GM12878 (cell line): ENCODE measurements at regions of chr3 and their contacts with region 1.

Region 1: DNA sequence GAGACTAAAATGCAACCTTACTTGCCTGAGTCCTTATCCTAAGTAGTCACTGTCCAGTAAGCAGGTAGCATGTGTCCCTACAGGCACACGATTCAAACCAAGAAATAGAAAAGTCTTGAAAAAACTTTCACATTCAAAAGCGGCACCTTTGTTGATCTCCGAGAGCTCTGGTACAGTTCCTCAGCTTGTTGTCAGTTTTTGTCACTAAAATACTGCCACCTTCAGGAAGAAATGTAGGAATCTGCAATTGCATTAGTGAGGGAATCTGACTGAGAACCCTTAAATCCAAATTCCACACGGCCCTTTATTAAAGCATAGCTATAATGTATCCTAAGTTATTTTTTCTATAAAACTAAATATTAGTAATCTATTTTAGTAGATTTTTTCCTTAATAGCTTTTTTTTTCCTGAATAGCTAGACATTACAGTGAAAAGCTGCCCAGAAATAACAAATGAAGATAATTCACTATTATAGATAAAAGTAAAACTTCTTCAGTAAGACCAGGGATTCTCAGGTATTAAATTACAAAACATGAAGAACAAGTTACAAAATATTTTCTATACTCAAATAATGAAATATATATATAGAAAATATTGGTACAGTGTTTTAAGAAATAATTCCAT is 44.0 kb downstream of the CCDC54 start:
- DNase-seq: no peak
- ATAC-seq: peak; percentile 86
- H3K4me3 ChIP-seq: no peak overlapping the region
- H3K27ac ChIP-seq: no peak overlapping the region
- H3K4me1 ChIP-seq: no peaks in the 10 kb centered on the region
- H3K27me3 ChIP-seq: no peaks in the 10 kb centered on the region
- CTCF ChIP-seq: peak; percentile 50 to 59 (median 57); a peak in 5 of 6 replicates
- EP300 ChIP-seq: no peak
- POLR2A ChIP-seq: no peak
- RAD21 ChIP-seq: peak; percentile 58

Region 2: GRCh38 chr3:107247110-107247509 is 174.2 kb before region 1 on chr3:
- CTCF ChIA-PET with region 1: interaction called, 10 read pairs
- POLR2A ChIA-PET with region 1: no interaction called
- RAD21 ChIA-PET with region 1: no interaction called
- SMC1A ChIA-PET with region 1: interaction called, 3 read pairs
- in situ Hi-C with region 1: no loop called
- intact Hi-C with region 1: no loop called
- DNase-seq: no peak
- ATAC-seq: no peak
- H3K4me3 ChIP-seq: no peak overlapping the region
- H3K27ac ChIP-seq: no peak overlapping the region
- H3K4me1 ChIP-seq: no peaks in the 10 kb centered on the region
- H3K27me3 ChIP-seq: no peaks in the 10 kb centered on the region
- CTCF ChIP-seq: no peak
- EP300 ChIP-seq: no peak
- POLR2A ChIP-seq: no peak
- RAD21 ChIP-seq: no peak

Region 3: GRCh38 chr3:107402214-107402613 is 19.1 kb before region 1 on chr3:
- CTCF ChIA-PET with region 1: interaction called, 7 read pairs
- POLR2A ChIA-PET with region 1: no interaction called
- RAD21 ChIA-PET with region 1: interaction called, 4 read pairs
- SMC1A ChIA-PET with region 1: interaction called, 13 read pairs
- in situ Hi-C with region 1: no loop called
- intact Hi-C with region 1: no loop called
- DNase-seq: no peak
- ATAC-seq: no peak
- H3K4me3 ChIP-seq: no peak overlapping the region
- H3K27ac ChIP-seq: no peak overlapping the region
- H3K4me1 ChIP-seq: no peaks in the 10 kb centered on the region
- H3K27me3 ChIP-seq: no peaks in the 10 kb centered on the region; a peak in 2 of 4 replicates
- CTCF ChIP-seq: no peak
- EP300 ChIP-seq: no peak
- POLR2A ChIP-seq: no peak
- RAD21 ChIP-seq: no peak

Region 4: GRCh38 chr3:107409365-107409764 is 11.9 kb before region 1 on chr3:
- CTCF ChIA-PET with region 1: interaction called, 20 read pairs
- POLR2A ChIA-PET with region 1: no interaction called
- RAD21 ChIA-PET with region 1: interaction called, 4 read pairs
- SMC1A ChIA-PET with region 1: interaction called, 3 read pairs
- in situ Hi-C with region 1: no loop called
- intact Hi-C with region 1: no loop called
- DNase-seq: no peak
- ATAC-seq: no peak
- H3K4me3 ChIP-seq: no peak overlapping the region
- H3K27ac ChIP-seq: no peak overlapping the region
- H3K4me1 ChIP-seq: no peaks in the 10 kb centered on the region
- H3K27me3 ChIP-seq: peaks cover 0 to 1% of the 10 kb centered on the region in 2 experiments; a peak in 1 of 4 replicates
- CTCF ChIP-seq: no peak
- EP300 ChIP-seq: no peak
- POLR2A ChIP-seq: no peak
- RAD21 ChIP-seq: no peak

Region 5: DNA sequence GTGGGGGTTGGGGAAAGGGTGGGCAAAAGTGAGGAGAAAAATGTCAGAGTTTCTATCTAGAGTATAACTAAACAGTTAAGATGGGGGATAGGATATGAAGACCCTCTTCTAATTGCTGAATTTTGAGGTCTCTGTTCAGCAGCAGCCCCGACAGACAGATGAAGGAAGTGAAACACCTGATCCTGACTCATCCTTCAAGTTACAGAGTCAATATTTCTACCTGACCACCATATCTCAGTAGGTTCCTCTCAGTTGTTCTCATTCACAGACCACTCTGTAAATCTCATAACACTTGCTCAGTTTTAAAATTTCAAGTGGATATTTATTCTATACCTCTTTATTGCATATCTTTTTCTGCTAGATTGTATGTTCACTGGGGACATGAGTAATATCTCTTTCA is 25.4 kb after region 1 on chr3:
- CTCF ChIA-PET with region 1: no interaction called
- POLR2A ChIA-PET with region 1: no interaction called
- RAD21 ChIA-PET with region 1: no interaction called
- SMC1A ChIA-PET with region 1: no interaction called
- in situ Hi-C with region 1: no loop called
- intact Hi-C with region 1: no loop called
- DNase-seq: no peak
- ATAC-seq: peak; percentile 56
- H3K4me3 ChIP-seq: no peak overlapping the region
- H3K27ac ChIP-seq: no peak overlapping the region
- H3K4me1 ChIP-seq: no peaks in the 10 kb centered on the region
- H3K27me3 ChIP-seq: no peaks in the 10 kb centered on the region
- CTCF ChIP-seq: no peak
- EP300 ChIP-seq: no peak
- POLR2A ChIP-seq: no peak
- RAD21 ChIP-seq: no peak